CD8-positive, alpha-beta T cell (primary cell): ENCODE measurements at regions of chr4 and their contacts with region 1.

Region 1: GRCh38 chr4:76179398-76180318 is 31.5 kb upstream of the NUP54 start:
- DNase-seq: peak; percentile 61 to 89 (median 82)
- ATAC-seq: peak; percentile 93
- H3K4me3 ChIP-seq: no peak overlapping the region
- H3K4me3 Mint-ChIP-seq: no peak overlapping the region
- H3K27ac ChIP-seq: no peak overlapping the region
- H3K27ac Mint-ChIP-seq: no peak overlapping the region
- H3K4me1 ChIP-seq: no peaks in the 10 kb centered on the region
- H3K4me1 Mint-ChIP-seq: no peaks in the 10 kb centered on the region
- H3K27me3 ChIP-seq: no peaks in the 10 kb centered on the region
- H3K27me3 Mint-ChIP-seq: no peaks in the 10 kb centered on the region
- CTCF ChIP-seq: peak; percentile 93

Region 2: DNA sequence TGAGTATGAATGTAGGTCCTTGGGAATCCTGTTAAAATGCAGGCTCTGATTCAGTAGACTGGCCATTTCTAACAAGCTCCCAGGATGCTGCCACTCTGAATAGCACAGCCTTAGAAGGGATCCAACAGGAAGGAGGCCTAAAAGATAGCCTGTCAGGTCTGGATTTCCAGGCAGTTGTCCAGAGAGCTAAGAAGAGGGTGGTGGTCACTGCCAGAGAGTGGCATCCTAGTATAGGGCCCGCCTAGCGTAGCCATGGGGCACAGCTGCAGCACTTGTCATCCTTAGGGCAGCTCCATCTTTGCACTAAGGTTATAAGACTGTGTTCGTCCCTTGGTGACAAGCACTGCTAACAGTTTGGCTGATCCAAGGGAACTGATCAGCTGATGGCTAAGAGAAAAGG is 11.0 kb before region 1 on chr4:
- CTCF ChIA-PET with region 1: interaction called, 14 read pairs
- POLR2A ChIA-PET with region 1: no interaction called
- intact Hi-C with region 1: no loop called
- DNase-seq: no peak
- ATAC-seq: no peak
- H3K4me3 ChIP-seq: no peak overlapping the region
- H3K4me3 Mint-ChIP-seq: no peak overlapping the region
- H3K27ac ChIP-seq: no peak overlapping the region
- H3K27ac Mint-ChIP-seq: no peak overlapping the region
- H3K4me1 ChIP-seq: no peaks in the 10 kb centered on the region
- H3K4me1 Mint-ChIP-seq: no peaks in the 10 kb centered on the region
- H3K27me3 ChIP-seq: no peaks in the 10 kb centered on the region
- H3K27me3 Mint-ChIP-seq: no peaks in the 10 kb centered on the region
- CTCF ChIP-seq: no peak

Region 3: DNA sequence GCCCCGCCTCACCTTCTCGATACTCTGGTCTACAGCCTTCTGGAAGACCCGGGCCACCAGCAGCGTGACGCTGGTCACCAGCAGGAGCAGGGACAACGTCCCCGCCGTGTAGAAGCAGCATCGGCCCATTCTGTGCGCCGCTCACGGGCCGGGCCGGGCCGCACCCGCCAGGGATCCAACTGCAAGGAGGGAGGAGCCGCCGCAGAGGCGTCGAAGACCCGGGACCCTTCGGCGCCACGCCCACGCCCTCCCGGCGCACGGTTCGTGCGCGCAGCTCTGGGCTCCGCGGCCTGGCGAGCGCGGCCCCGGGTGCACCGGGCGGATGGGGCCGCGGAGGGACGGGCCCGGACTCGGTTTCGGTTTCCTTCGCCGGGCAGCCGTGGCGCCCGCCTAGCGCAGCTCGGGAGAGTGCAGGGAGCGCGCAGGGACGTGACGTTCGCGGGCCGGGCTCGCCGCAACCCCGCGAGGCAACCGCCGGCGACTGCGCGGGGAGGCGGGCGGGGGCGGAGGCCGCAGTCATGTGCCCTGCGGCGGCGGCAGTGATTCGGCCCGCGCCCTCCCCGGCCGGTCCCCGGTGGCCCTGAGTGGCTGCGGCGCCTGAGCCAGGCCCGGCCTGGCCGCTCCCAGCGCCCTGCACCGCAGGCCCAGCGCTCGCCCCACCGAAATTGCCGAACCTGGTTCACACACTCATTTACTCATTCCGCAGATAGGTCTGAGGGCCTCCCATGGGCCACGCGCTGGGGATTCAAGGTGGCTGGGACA is 33.9 kb after region 1 on chr4 and contains the start of gene SCARB2:
- CTCF ChIA-PET with region 1: interaction called, 23 read pairs
- POLR2A ChIA-PET with region 1: interaction called, 3 read pairs
- intact Hi-C with region 1: loop called in 1 of 2 experiments (anchors 1 kb)
- DNase-seq: peak; percentile 44 to 91 (median 73)
- ATAC-seq: peak; percentile 64
- H3K4me3 ChIP-seq: peak within 1 kb of the TSS; percentile 71 to 75
- H3K4me3 Mint-ChIP-seq: peak within 1 kb of the TSS; percentile 89
- H3K27ac ChIP-seq: peak within 1 kb of the TSS; percentile 85
- H3K27ac Mint-ChIP-seq: peak within 1 kb of the TSS; percentile 95
- H3K4me1 ChIP-seq: peaks cover 29% of the 10 kb centered on the region
- H3K4me1 Mint-ChIP-seq: peaks cover 59% of the 10 kb centered on the region
- H3K27me3 ChIP-seq: no peaks in the 10 kb centered on the region
- H3K27me3 Mint-ChIP-seq: no peaks in the 10 kb centered on the region
- CTCF ChIP-seq: no peak
- total RNA-seq, gene SCARB2: 33.3 to 34.4 TPM

Region 4: GRCh38 chr4:76251441-76252270 is 72.0 kb after region 1 on chr4 and contains the start of gene FAM47E:
- CTCF ChIA-PET with region 1: interaction called, 30 read pairs
- POLR2A ChIA-PET with region 1: no interaction called
- intact Hi-C with region 1: loop called in 1 of 2 experiments (anchors 5 kb)
- DNase-seq: peak; percentile 3 to 55 (median 19)
- ATAC-seq: peak; percentile 62
- H3K4me3 ChIP-seq: peak within 1 kb of the TSS; percentile 41 to 57
- H3K4me3 Mint-ChIP-seq: peak within 1 kb of the TSS; percentile 80
- H3K27ac ChIP-seq: no peak within 1 kb of the TSS
- H3K27ac Mint-ChIP-seq: no peak within 1 kb of the TSS
- H3K4me1 ChIP-seq: peaks cover 6% of the 10 kb centered on the region
- H3K4me1 Mint-ChIP-seq: peaks cover 7% of the 10 kb centered on the region
- H3K27me3 ChIP-seq: peaks cover 12 to 21% of the 10 kb centered on the region in 2 experiments
- H3K27me3 Mint-ChIP-seq: peaks cover 56% of the 10 kb centered on the region
- CTCF ChIP-seq: no peak
- total RNA-seq, gene FAM47E: 0.19 to 0.44 TPM

Region 5: DNA sequence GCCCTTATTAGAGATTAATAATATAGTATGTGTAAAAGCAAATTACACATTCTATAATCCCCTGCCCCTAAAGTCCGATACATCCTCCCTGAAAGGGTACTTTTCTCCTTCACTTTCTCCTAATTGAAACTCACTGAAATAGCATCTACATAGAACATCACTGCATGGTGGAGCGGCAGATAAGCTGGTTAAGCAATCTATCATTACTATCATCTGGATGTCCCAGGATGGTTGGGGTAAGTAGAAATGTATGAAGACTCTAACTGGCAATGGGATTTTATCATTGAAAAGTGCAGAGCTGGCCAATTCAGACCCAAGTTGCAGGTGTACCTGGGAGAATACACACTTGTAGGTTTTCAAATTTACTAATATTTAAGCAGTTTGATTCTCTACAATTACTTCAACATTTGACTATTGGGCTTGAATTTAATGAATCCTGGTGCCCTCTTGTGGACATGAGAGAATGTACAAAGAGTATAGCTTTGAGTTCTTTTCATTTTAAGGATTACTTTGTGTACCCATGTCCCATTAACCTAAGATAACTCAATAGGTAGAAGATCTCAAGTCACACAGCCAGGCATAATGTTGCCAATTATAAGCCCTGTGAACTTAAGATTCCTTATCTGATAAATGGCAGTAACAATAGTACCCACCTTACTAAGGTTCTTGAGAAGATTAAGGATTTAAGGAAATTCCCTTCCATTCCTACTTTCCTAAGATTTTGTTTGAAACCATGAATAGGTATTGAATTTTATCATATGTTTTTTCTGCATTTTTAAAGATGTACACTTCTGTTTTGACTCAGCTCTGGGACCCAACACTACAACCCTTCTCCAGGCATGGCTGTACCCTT is 325.2 kb after region 1 on chr4:
- CTCF ChIA-PET with region 1: interaction called, 19 read pairs
- POLR2A ChIA-PET with region 1: no interaction called
- intact Hi-C with region 1: loop called in 1 of 2 experiments (anchors 1 kb)
- DNase-seq: peak in 2 of 9 experiments; percentile 48 to 57
- ATAC-seq: no peak
- H3K4me3 ChIP-seq: no peak overlapping the region
- H3K4me3 Mint-ChIP-seq: no peak overlapping the region
- H3K27ac ChIP-seq: no peak overlapping the region
- H3K27ac Mint-ChIP-seq: no peak overlapping the region
- H3K4me1 ChIP-seq: no peaks in the 10 kb centered on the region
- H3K4me1 Mint-ChIP-seq: no peaks in the 10 kb centered on the region
- H3K27me3 ChIP-seq: no peaks in the 10 kb centered on the region
- H3K27me3 Mint-ChIP-seq: peaks cover 16% of the 10 kb centered on the region
- CTCF ChIP-seq: peak; percentile 55

Region 6: DNA sequence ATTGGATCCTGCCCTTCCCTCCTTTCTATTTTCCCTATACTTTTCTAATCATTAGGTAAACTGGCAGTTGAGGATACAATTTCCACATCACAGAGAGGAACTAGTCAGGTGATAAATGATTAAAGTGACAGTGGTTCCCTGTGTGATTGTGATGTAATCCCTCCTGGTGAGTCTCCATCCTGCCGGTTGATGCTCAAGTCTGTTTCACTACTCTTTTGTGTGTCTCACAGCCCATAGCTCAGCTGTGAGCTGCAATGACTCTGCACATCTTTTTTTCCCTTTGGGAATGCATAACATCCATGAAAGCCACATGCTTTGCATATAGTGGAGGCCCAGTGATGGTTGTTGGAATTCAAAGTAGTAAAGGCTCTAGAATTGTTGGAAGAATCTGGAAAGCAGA is 835.7 kb after region 1 on chr4:
- CTCF ChIA-PET with region 1: no interaction called
- POLR2A ChIA-PET with region 1: no interaction called
- intact Hi-C with region 1: no loop called
- DNase-seq: no peak
- ATAC-seq: no peak
- H3K4me3 ChIP-seq: no peak overlapping the region
- H3K4me3 Mint-ChIP-seq: no peak overlapping the region
- H3K27ac ChIP-seq: no peak overlapping the region
- H3K27ac Mint-ChIP-seq: no peak overlapping the region
- H3K4me1 ChIP-seq: peaks cover 24% of the 10 kb centered on the region
- H3K4me1 Mint-ChIP-seq: peaks cover 41% of the 10 kb centered on the region
- H3K27me3 ChIP-seq: no peaks in the 10 kb centered on the region
- H3K27me3 Mint-ChIP-seq: no peaks in the 10 kb centered on the region
- CTCF ChIP-seq: no peak

Region 7: DNA sequence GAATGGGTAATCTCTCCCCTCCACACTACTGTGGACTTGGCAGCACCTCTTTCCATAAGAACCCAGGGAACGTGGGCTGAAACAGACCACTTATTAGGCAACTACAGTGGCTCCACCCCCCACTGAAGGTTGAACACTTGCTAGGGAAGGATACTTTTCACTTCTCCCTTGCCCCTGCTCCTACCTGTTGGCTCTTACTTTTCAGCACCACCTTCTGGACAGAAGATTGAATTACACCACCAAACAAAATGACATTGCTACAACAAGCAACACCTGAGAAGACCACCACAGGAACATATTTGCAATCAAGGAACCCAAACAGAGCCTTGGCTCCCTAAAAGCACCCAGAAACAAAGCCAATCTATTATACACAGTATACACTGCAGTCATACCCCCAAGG is 1293.9 kb after region 1 on chr4:
- CTCF ChIA-PET with region 1: no interaction called
- POLR2A ChIA-PET with region 1: no interaction called
- intact Hi-C with region 1: loop called in 1 of 2 experiments (anchors 5 kb)
- DNase-seq: peak in 1 of 9 experiments; percentile 6
- ATAC-seq: no peak
- H3K4me3 ChIP-seq: no peak overlapping the region
- H3K4me3 Mint-ChIP-seq: no peak overlapping the region
- H3K27ac ChIP-seq: no peak overlapping the region
- H3K27ac Mint-ChIP-seq: no peak overlapping the region
- H3K4me1 ChIP-seq: no peaks in the 10 kb centered on the region
- H3K4me1 Mint-ChIP-seq: no peaks in the 10 kb centered on the region
- H3K27me3 ChIP-seq: no peaks in the 10 kb centered on the region
- H3K27me3 Mint-ChIP-seq: peaks cover 21% of the 10 kb centered on the region
- CTCF ChIP-seq: no peak